BJ (cell line): ENCODE measurements at regions of chr4 and their contacts with region 1.

Region 1: DNA sequence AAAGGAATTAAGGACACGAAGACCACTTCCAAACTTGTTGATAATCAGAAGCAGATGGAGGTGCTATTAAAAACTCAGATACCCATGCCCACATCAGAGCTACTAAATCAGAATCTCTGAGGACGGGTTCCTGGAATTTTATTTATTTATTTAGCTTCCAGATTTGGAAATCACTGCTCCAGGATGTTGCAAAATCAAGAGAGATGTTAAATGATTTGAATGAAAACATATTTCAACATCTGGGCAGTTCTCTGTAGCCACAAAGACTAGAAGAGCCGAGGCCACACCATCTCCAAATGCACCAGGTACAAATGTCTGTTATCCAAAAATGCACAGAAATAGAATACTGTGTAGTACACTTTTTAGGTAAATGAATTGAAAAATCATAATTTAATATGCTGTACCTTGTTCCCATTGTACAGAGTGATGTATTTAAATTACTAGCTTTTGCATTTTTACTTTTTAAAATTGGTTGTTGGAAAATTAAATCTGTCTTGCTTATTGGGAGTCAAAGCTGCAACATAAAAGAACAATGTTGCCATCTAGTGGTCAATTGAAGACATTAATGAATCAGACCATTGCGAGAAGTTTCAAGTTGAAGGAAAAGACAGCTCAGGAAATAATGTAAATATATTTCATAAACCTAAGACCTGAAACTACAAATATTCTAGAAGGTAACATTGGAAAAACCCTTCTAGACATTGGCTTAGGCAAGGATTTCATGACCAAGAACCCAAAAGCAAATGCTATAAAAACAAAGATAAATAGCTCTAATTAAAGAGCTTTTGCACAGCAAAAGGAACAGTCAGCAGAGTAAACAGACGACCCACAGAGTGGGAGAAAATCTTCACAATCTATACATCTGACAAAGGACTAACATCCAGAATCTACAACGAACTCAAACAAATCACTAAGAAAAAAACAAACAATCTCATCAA is 151.3 kb upstream of the TTC29 start:
- DNase-seq: no peak
- H3K4me3 ChIP-seq: no peak overlapping the region
- H3K27me3 ChIP-seq: 0 out of 2 replicates have a peak, but pooled peaks cover 2% of the 10 kb centered on the region
- CTCF ChIP-seq: peak; percentile 49

Region 2: DNA sequence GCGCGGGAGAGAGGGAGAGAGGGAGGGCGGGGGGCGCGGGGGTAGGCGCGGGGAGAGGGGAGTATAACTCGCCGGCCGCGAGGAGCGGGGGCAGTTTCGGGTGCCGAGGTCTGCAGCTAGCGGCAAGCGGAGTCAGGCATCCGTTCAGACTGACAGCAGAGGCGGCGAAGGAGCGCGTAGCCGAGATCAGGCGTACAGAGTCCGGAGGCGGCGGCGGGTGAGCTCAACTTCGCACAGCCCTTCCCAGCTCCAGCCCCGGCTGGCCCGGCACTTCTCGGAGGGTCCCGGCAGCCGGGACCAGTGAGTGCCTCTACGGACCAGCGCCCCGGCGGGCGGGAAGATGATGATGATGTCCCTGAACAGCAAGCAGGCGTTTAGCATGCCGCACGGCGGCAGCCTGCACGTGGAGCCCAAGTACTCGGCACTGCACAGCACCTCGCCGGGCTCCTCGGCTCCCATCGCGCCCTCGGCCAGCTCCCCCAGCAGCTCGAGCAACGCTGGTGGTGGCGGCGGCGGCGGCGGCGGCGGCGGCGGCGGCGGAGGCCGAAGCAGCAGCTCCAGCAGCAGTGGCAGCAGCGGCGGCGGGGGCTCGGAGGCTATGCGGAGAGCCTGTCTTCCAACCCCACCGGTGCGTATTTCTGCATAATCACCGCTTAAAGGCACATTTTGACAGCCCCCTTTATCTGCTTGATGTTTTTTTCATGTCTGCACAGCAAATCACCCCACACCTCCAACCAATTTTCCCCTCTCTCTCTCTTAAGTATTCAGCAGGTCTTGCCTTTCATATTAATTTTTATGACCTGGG is 457.9 kb before region 1 on chr4 and contains the start of gene POU4F2:
- CTCF ChIA-PET with region 1: no interaction called
- POLR2A ChIA-PET with region 1: no interaction called
- DNase-seq: no peak
- H3K4me3 ChIP-seq: no peak within 1 kb of the TSS
- H3K27me3 ChIP-seq: peaks cover 36% of the 10 kb centered on the region
- CTCF ChIP-seq: no peak
- polyA plus RNA-seq, gene POU4F2: not detected in 2 replicates

Region 3: GRCh38 chr4:147060151-147060931 is 36.6 kb before region 1 on chr4:
- CTCF ChIA-PET with region 1: interaction called, 11 read pairs
- POLR2A ChIA-PET with region 1: no interaction called
- DNase-seq: peak; percentile 41
- H3K4me3 ChIP-seq: no peak overlapping the region
- H3K27me3 ChIP-seq: no peaks in the 10 kb centered on the region
- CTCF ChIP-seq: no peak

Region 4: GRCh38 chr4:147617173-147617840 is 520.4 kb after region 1 on chr4 and contains the start of gene TMEM184C:
- CTCF ChIA-PET with region 1: no interaction called
- POLR2A ChIA-PET with region 1: no interaction called
- DNase-seq: peak; percentile 68
- H3K4me3 ChIP-seq: peak within 1 kb of the TSS; percentile 81
- H3K27me3 ChIP-seq: no peaks in the 10 kb centered on the region
- CTCF ChIP-seq: peak; percentile 29
- polyA plus RNA-seq, gene TMEM184C: 27.1 and 35.1 TPM in 2 replicates